ENCODE measurements at regions of chr11 and their contacts with region 1.

Region 1: DNA sequence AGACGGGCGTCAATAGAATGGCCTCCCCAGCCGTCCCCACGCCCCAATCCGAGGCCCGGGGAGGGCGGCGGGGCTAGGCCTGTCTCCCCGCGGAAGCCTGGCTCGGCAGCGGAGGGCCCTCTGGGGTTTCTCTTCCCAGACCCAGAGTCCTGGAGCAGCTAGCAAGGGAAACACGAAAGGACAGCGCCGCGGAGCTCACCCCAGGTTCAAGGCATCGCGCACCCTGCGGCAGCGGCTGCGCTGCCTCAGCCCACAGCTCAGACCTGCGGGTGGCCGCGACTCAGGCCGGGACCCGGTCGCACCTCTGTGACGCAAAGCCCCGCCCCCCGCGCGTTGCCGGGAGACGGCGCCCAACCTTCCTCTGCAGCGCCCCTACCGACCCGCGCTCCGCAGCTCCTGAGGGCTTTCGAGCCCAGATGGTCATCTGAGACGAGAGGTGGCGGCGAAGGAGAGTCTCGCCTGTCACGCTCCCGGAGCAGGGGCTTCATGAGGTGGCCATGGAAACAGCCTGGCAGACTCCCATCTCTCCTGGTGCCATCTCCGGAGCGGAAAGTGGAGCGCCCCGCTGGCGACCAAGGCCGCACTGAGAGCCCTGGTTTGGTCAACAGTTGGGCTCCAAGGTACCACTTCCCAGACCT is at the start of gene RNF141:
- DNase-seq: peak; percentile 92
- ATAC-seq: peak; percentile 92
- H3K4me3 ChIP-seq: peak within 1 kb of the TSS; percentile 76
- H3K27ac ChIP-seq: peak within 1 kb of the TSS; percentile 59
- H3K4me1 ChIP-seq: peaks cover 22% of the 10 kb centered on the region
- H3K27me3 ChIP-seq: no peaks in the 10 kb centered on the region
- CTCF ChIP-seq: peak; percentile 73
- total RNA-seq, gene RNF141: 12.6 and 13.8 TPM in 2 replicates

Region 2: DNA sequence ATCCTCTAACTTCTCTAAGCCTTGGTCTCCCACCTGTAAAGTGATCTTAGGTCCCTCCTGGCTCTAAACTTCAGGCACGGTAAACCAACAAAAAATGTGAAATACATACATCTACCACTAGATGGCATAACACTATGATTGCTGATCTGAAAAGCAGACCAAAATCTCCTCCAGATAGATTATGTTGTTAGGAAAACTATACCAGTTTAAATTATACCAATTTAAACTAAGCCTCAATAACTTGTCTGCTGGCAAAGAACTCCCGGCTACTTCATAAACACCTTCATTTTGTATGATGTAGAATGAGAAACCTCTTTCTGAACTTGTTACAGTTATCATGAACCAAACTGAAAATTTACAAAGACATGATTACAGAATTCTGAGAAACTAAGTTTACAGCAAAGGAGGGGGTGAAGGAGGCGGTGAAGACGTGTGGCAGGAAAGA is 332.9 kb before region 1 on chr11:
- CTCF ChIA-PET with region 1: no interaction called
- POLR2A ChIA-PET with region 1: interaction called, 11 read pairs
- intact Hi-C with region 1: no loop called
- DNase-seq: peak; percentile 74
- ATAC-seq: peak; percentile 74
- H3K4me3 ChIP-seq: no peak overlapping the region
- H3K27ac ChIP-seq: no peak overlapping the region
- H3K4me1 ChIP-seq: no peaks in the 10 kb centered on the region
- H3K27me3 ChIP-seq: no peaks in the 10 kb centered on the region
- CTCF ChIP-seq: peak; percentile 72

Region 3: DNA sequence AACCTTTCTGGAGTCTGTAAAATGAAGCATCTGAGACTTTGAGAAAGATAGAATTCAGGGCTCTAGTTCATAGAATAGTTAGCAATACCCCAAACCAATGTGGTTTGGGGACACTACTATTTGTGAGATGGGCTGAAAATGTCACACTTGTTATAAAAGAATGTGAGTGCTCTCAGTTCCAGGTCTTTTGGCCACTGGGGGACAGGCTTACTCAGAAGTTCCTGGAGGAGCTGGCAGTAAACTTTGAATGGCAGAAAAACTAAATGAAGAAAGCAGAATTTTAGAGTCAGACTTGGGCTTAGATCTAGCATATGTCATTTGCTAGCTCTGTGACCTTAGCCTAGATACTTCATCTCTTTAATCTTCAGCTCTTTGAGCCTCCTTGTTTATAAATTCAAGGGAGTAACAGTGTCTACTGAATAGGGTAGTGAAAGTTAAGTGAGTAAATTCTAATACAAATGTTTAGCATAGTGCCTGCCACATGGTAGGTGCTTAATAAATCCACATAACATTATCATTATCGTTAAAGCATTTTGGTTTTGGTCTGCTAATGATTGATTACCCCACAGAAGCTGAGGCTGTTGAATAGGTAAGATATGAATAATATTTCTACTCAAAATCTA is 23.8 kb after region 1 on chr11:
- CTCF ChIA-PET with region 1: no interaction called
- POLR2A ChIA-PET with region 1: no interaction called
- intact Hi-C with region 1: loop called (anchors 2 kb)
- DNase-seq: peak; percentile 33
- ATAC-seq: peak; percentile 23; the same call in 1 of the 2 replicates
- H3K4me3 ChIP-seq: no peak overlapping the region
- H3K27ac ChIP-seq: no peak overlapping the region
- H3K4me1 ChIP-seq: peaks cover 18% of the 10 kb centered on the region
- H3K27me3 ChIP-seq: no peaks in the 10 kb centered on the region
- CTCF ChIP-seq: peak; percentile 51; the same call in 1 of the 2 replicates

Region 4: GRCh38 chr11:10594407-10594806 is 53.4 kb after region 1 on chr11:
- CTCF ChIA-PET with region 1: interaction called, 5 read pairs
- POLR2A ChIA-PET with region 1: interaction called, 8 read pairs
- intact Hi-C with region 1: loop called (anchors 2 kb)
- DNase-seq: peak; percentile 93
- ATAC-seq: peak; percentile 86
- H3K4me3 ChIP-seq: no peak overlapping the region
- H3K27ac ChIP-seq: peak overlapping the region; percentile 88
- H3K4me1 ChIP-seq: peaks cover 42% of the 10 kb centered on the region
- H3K27me3 ChIP-seq: no peaks in the 10 kb centered on the region
- CTCF ChIP-seq: no peak

Measured in PC-3 (cell line).